ENCODE measurements at regions of chr12 and their contacts with region 1.

Region 1: DNA sequence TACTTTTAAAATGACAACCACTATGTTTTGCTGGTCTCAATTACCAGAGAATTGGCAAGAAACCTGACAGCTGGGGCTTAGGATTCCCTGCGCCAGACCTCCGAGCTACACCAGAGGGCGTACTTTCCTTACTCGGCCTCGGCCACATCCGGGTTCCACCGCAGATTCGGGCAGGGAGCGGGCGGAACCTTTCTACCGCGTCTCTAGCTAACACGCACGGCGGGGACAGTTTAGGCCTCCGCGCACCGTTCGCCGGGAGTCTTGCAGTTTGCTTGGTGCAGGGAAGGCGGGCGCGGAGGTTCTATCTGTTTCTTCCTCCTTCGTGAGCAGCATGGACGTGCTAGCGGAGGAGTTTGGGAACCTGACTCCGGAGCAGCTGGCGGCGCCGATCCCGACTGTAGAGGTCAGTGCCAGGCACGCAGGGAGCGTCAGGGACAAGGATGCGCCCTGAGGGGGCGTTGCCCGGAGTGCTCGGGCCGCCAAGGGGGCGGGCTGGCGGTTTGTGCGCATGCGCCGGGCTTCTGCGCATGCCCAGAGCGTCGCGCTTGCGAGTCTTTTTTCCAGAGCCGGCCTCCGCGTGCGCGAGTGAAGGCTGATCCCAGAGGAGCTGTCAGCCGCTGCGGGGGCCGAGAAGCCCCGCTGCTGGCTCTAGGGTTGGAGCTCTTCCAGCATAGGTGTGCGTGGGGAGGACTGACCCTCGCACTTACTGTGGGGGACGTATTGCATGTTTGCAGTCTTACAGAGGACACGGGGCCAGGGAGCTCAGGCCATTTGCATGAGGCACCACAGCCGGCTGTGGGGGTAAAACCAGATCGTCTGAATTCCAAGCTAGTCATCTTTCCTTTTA is at the start of gene POLR3B:
- DNase-seq: peak; percentile 98
- ATAC-seq: peak; percentile 95
- H3K4me3 Mint-ChIP-seq: peak within 1 kb of the TSS; percentile 92
- H3K27ac Mint-ChIP-seq: peak within 1 kb of the TSS; percentile 92
- H3K4me1 Mint-ChIP-seq: peaks cover 14% of the 10 kb centered on the region
- H3K27me3 Mint-ChIP-seq: no peaks in the 10 kb centered on the region
- total RNA-seq, gene POLR3B: 9.1 to 11.7 TPM

Region 2: DNA sequence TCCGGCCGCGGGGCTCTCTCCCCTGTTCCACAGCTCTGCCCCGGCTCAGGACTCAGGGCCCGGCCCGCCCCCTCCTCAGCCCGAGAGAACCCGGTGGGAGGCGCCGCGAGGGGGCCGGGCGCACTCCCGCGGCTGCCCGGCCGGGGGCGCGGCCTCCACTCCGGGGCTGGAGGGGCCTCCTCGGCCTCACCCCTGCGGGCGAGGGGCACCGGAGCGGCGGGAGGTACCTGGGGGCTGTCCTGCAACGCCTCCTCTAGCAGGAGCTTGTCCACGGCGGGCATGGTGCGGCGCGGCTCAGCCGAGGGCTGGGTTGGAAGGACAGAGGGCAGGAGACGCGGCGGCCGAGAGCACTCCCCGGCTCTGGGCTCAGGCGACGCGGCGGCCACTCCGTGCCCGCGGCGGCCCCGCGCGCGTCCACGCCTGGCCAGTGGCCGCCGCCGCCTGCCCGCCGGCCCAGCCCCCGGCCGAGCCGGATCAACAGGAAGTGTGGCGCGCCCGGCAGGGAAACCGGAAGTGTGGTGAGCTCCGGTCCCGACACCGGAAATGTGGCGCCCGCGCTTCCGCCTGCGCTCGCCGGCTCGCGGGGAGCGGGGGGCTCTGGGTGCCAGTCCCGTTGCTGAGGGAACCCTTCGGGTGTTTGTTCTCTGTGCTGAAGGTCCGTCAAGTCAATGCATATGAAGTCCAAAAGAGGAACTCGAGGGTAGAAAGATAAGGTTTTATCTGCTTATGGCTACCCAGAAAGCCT is 1121.9 kb before region 1 on chr12 and contains the start of gene APPL2:
- CTCF ChIA-PET with region 1: no interaction called
- POLR2A ChIA-PET with region 1: no interaction called
- intact Hi-C with region 1: loop called in 1 of 2 experiments (anchors 5 kb)
- DNase-seq: peak; percentile 87
- ATAC-seq: peak; percentile 84
- H3K4me3 Mint-ChIP-seq: peak within 1 kb of the TSS; percentile 85
- H3K27ac Mint-ChIP-seq: peak within 1 kb of the TSS; percentile 86
- H3K4me1 Mint-ChIP-seq: peaks cover 41% of the 10 kb centered on the region
- H3K27me3 Mint-ChIP-seq: no peaks in the 10 kb centered on the region
- total RNA-seq, gene APPL2: 13.9 to 17.2 TPM

Region 3: DNA sequence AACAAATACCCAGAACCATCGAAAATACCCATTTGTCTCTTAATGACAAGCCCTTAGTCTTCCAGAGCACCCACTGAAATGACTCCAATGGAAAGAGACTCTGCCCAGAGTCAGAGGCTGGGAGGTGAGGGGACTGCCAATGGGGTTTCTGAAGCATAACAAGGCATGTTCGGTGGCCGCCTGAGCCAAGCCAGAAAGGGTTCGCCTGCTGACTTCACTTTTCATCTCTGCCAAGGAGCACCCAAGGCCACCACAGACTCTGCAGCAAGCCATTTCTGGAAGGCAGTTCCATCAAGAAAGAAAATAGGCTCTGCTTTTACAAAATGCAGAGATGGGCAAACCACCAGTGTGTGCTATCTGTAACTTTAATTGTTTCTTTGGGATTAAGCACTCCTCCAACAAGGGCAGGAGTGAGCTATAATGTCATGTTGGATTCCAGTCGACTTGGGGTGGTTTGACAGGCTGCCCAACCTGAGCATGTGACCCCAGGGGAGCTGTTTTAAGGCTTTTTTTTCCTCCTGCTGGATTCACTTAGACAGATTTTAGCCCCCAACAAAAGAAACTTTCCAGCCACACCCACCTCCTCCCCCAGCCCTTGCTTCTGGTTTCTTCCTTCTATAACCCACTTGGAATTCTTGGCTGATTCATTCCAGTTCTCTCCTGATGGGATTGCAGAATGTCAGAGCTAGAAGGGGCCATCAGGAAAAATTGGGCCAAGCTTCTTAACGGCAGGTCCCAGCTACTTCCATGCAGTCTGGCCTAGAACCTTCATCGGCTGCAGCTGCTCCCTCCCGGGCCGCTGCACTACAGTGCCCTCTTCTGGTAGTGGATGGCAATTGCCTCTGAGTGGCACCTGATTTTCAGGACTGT is 134.1 kb before region 1 on chr12:
- CTCF ChIA-PET with region 1: interaction called, 7 read pairs
- POLR2A ChIA-PET with region 1: interaction called, 4 read pairs
- intact Hi-C with region 1: loop called in 1 of 2 experiments (anchors 1 kb)
- DNase-seq: peak; percentile 85
- ATAC-seq: peak; percentile 85
- H3K4me3 Mint-ChIP-seq: no peak overlapping the region
- H3K27ac Mint-ChIP-seq: no peak overlapping the region
- H3K4me1 Mint-ChIP-seq: peaks cover 14% of the 10 kb centered on the region
- H3K27me3 Mint-ChIP-seq: no peaks in the 10 kb centered on the region

Region 4: GRCh38 chr12:106302401-106303201 is 55.2 kb before region 1 on chr12 and contains the start of gene TCP11L2:
- CTCF ChIA-PET with region 1: interaction called, 7 read pairs
- POLR2A ChIA-PET with region 1: interaction called, 5 read pairs
- intact Hi-C with region 1: loop called (anchors 1 to 2 kb)
- DNase-seq: peak; percentile 94
- ATAC-seq: peak; percentile 67
- H3K4me3 Mint-ChIP-seq: peak within 1 kb of the TSS; percentile 78
- H3K27ac Mint-ChIP-seq: peak within 1 kb of the TSS; percentile 99
- H3K4me1 Mint-ChIP-seq: peaks cover 59% of the 10 kb centered on the region
- H3K27me3 Mint-ChIP-seq: no peaks in the 10 kb centered on the region
- total RNA-seq, gene TCP11L2: 8.6 to 11.8 TPM

Region 5: GRCh38 chr12:106774005-106774807 is 416.4 kb after region 1 on chr12 and contains the start of gene RIC8B:
- CTCF ChIA-PET with region 1: interaction called, 4 read pairs
- POLR2A ChIA-PET with region 1: no interaction called
- intact Hi-C with region 1: loop called in 1 of 2 experiments (anchors 1 kb)
- DNase-seq: peak; percentile 89
- ATAC-seq: peak; percentile 92
- H3K4me3 Mint-ChIP-seq: peak within 1 kb of the TSS; percentile 95
- H3K27ac Mint-ChIP-seq: peak within 1 kb of the TSS; percentile 98
- H3K4me1 Mint-ChIP-seq: peaks cover 32% of the 10 kb centered on the region
- H3K27me3 Mint-ChIP-seq: no peaks in the 10 kb centered on the region
- total RNA-seq, gene RIC8B: 10.7 to 11.3 TPM

Region 6: DNA sequence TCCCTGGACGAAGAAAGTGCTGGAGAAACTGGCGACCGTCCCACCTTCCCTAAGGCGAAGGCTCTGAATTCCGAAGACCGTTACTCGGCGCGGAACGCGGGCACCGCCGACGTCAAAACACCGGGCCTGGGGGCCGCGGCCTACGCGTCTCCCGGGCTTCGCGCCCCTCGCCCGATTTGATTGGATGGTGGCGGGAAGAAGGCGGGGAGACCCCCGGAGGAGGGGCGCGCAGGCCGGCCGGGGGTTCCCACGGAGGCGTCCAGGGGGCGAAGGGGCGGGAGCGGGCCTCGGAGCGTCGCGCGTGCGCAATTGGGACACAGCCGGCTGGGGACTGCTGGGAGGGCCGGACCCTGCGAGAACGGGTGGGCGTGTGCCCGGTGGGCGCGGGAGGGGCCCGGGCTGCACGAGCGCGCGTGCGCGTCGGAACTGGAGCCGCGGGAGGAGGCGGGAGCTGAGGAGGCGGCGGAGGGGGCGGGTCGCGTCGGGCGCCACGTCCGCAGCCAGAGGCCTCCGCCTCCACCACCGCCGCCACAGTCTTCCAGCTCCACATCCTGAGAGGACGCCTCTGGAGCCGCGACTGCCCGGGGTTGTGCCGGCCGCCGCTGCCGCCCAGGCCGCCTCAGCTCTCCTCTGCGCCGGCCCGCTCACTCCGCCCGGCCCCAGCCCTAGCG is 597.7 kb after region 1 on chr12 and contains the start of gene TMEM263:
- CTCF ChIA-PET with region 1: interaction called, 4 read pairs
- POLR2A ChIA-PET with region 1: interaction called, 3 read pairs
- intact Hi-C with region 1: loop called in 1 of 2 experiments (anchors 1 kb)
- DNase-seq: peak; percentile 94
- ATAC-seq: peak; percentile 81
- H3K4me3 Mint-ChIP-seq: peak within 1 kb of the TSS; percentile 100
- H3K27ac Mint-ChIP-seq: peak within 1 kb of the TSS; percentile 98
- H3K4me1 Mint-ChIP-seq: peaks cover 23% of the 10 kb centered on the region
- H3K27me3 Mint-ChIP-seq: no peaks in the 10 kb centered on the region
- total RNA-seq, gene TMEM263: 38.9 to 43.0 TPM